ENCODE measurements at regions of chr17 and their contacts with region 1.

Region 1: GRCh38 chr17:2244545-2245525 is 58.8 kb downstream of the SMG6 start:
- DNase-seq: peak; percentile 92
- ATAC-seq: peak; percentile 84
- H3K4me3 ChIP-seq: no peak overlapping the region
- H3K27ac ChIP-seq: peak overlapping the region; percentile 93
- H3K4me1 ChIP-seq: peaks cover 19% of the 10 kb centered on the region
- H3K27me3 ChIP-seq: no peaks in the 10 kb centered on the region
- CTCF ChIP-seq: peak; percentile 99
- POLR2A ChIP-seq: peak; percentile 59; the same call in 1 of the 2 replicates
- RAD21 ChIP-seq: peak; percentile 99

Region 2: GRCh38 chr17:2054512-2055291 is 190.1 kb before region 1 on chr17 and contains the start of gene HIC1:
- CTCF ChIA-PET with region 1: interaction called, 57 read pairs
- POLR2A ChIA-PET with region 1: interaction called, 4 read pairs
- dilution Hi-C with region 1: no loop called
- in situ Hi-C with region 1: no loop called
- intact Hi-C with region 1: loop called (anchors 1 kb)
- DNase-seq: peak; percentile 73
- ATAC-seq: peak; percentile 51
- H3K4me3 ChIP-seq: peak within 1 kb of the TSS; percentile 75
- H3K27ac ChIP-seq: peak within 1 kb of the TSS; percentile 98
- H3K4me1 ChIP-seq: peaks cover 18% of the 10 kb centered on the region
- H3K27me3 ChIP-seq: no peaks in the 10 kb centered on the region
- CTCF ChIP-seq: peak; percentile 93
- POLR2A ChIP-seq: peak; percentile 98
- RAD21 ChIP-seq: peak; percentile 89
- total RNA-seq, gene HIC1: 10.0 and 10.4 TPM in 2 replicates

Region 3: DNA sequence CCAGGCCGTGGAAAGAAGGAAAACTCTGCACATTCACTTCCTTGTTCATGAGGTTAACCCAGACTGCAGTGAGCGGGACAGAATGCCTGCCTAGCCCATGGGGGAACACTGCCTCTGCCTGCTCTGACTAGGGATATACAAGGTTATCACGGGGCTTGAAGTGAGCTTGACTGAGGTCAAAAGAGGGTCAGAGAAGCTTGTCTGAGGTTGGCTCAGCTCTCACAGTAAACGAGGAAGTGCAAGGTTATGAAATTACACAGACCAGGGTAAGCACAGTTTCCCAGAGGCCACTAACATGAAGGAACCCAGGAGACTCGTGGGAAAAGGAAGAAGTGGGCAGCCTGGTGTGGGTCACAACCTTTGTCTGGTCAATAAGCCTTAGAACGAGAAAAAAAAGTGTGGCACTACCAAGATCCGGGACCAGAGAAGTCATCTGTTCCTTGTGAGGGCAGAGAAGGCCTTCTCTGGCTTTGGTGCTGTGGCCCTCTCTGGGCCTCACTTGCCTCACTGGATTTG is 161.2 kb before region 1 on chr17:
- CTCF ChIA-PET with region 1: interaction called, 12 read pairs
- POLR2A ChIA-PET with region 1: no interaction called
- dilution Hi-C with region 1: no loop called
- in situ Hi-C with region 1: no loop called
- intact Hi-C with region 1: no loop called
- DNase-seq: no peak
- ATAC-seq: no peak
- H3K4me3 ChIP-seq: no peak overlapping the region
- H3K27ac ChIP-seq: peak overlapping the region; percentile 77
- H3K4me1 ChIP-seq: peaks cover 29% of the 10 kb centered on the region
- H3K27me3 ChIP-seq: no peaks in the 10 kb centered on the region
- CTCF ChIP-seq: no peak
- POLR2A ChIP-seq: no peak
- RAD21 ChIP-seq: no peak

Region 4: GRCh38 chr17:2111719-2112118 is 133.1 kb before region 1 on chr17:
- CTCF ChIA-PET with region 1: interaction called, 5 read pairs
- POLR2A ChIA-PET with region 1: no interaction called
- dilution Hi-C with region 1: no loop called
- in situ Hi-C with region 1: no loop called
- intact Hi-C with region 1: loop called (anchors 5 kb)
- DNase-seq: peak; percentile 97
- ATAC-seq: peak; percentile 80
- H3K4me3 ChIP-seq: no peak overlapping the region
- H3K27ac ChIP-seq: peak overlapping the region; percentile 81
- H3K4me1 ChIP-seq: peaks cover 10% of the 10 kb centered on the region
- H3K27me3 ChIP-seq: no peaks in the 10 kb centered on the region
- CTCF ChIP-seq: no peak
- POLR2A ChIP-seq: no peak
- RAD21 ChIP-seq: no peak

Region 5: GRCh38 chr17:2282297-2282873 is 37.5 kb after region 1 on chr17:
- CTCF ChIA-PET with region 1: interaction called, 3 read pairs
- POLR2A ChIA-PET with region 1: no interaction called
- dilution Hi-C with region 1: no loop called
- in situ Hi-C with region 1: no loop called
- intact Hi-C with region 1: loop called (anchors 2 kb)
- DNase-seq: peak; percentile 91
- ATAC-seq: peak; percentile 95
- H3K4me3 ChIP-seq: no peak overlapping the region
- H3K27ac ChIP-seq: 0 out of 2 replicates have a peak overlapping the region, but pooled peaks have one; percentile 7
- H3K4me1 ChIP-seq: peaks cover 7% of the 10 kb centered on the region
- H3K27me3 ChIP-seq: no peaks in the 10 kb centered on the region
- CTCF ChIP-seq: peak; percentile 66
- POLR2A ChIP-seq: no peak
- RAD21 ChIP-seq: peak; percentile 68

Measured in IMR-90 (cell line).